Natural killer cell (primary cell): ENCODE measurements at regions of chr20 and their contacts with region 1.

Region 1: DNA sequence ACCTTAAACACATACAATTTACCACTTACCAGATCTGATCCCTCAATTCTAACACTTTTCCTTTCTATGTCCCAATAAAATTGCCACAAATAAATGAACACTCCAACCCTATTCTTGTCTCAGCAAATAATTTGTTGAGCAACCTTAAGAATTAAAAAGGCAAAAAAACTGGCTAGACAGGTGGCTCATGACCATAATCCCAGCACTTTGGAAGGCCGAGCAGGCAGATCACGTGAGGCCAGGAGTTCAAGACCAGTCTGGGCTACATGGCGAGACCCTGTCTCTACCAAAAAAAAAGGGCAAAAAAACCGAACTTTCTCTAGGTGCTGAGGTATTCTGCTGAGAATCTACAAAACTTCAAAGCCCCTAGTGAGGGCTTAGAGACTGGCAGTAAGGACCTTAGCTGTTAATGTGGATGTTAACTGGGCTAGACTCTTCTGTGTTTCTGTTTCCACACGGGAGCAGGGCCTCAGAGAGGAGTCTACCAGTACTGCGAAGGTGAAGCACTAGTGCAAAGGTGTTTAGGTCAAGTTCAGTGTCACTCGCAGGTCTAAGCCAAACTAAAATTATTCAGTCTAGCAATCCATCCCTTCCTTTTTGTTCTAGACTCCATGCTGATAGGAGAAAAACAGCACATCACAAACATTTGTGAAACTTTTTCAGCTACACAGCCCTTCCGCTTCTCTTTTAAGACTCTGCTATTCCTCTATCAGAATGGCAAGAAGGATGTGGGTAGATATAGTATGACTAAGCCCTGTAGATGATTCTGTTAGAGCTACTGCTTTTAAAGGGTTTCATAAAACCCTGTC is 2.6 kb downstream of the FASTKD5 start:
- DNase-seq: peak in 1 of 2 donors; percentile 57
- ATAC-seq: peak; percentile 18 to 66 (median 28)
- H3K4me3 ChIP-seq: no peak overlapping the region
- H3K4me3 Mint-ChIP-seq: peak overlapping the region; percentile 77
- H3K27ac ChIP-seq: peak overlapping the region; percentile 40
- H3K27ac Mint-ChIP-seq: peak overlapping the region; percentile 93 to 96
- H3K4me1 ChIP-seq: peaks cover 33% of the 10 kb centered on the region
- H3K4me1 Mint-ChIP-seq: peaks cover 53 to 62% of the 10 kb centered on the region in 2 donors
- H3K27me3 ChIP-seq: no peaks in the 10 kb centered on the region
- H3K27me3 Mint-ChIP-seq: no peaks in the 10 kb centered on the region
- CTCF ChIP-seq: no peak

Region 2: DNA sequence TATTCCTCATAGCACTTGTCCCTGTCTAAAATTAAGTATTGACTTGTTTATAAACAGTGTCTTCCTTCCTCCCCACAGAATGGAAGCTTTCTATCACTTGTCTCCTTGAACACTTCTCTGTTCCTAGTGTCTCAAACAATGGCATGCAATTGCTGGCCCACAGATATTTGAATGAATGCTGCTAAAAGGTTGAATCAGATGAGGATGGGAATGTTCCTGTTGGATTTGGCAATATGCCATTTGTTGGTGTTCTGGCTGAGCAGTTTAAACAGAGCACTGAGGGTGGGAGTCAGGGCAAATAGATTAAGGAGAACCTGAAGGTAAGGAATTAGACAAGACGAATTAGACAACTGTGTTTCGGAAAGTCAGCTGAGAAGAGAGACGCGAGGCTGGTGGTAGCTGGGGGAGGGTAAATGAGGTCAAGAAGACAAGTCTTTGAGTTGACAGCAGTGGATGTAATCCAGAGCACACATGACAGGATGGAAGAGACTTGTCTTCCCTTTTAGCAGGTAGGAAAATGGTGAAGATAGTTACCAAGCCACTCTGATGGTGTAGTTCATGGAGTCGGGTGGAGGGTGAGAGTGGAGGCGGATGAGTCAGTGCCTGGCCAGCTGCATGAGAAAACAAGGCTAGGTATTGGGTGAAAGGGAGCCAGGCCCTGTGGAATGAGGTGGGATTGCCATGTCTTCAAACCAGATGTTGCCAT is 171.9 kb before region 1 on chr20:
- intact Hi-C with region 1: no loop called
- DNase-seq: no peak
- ATAC-seq: no peak
- H3K4me3 ChIP-seq: no peak overlapping the region
- H3K4me3 Mint-ChIP-seq: no peak overlapping the region
- H3K27ac ChIP-seq: peak overlapping the region; percentile 67
- H3K27ac Mint-ChIP-seq: no peak overlapping the region
- H3K4me1 ChIP-seq: peaks cover 7% of the 10 kb centered on the region
- H3K4me1 Mint-ChIP-seq: peaks cover 8 to 10% of the 10 kb centered on the region in 2 donors
- H3K27me3 ChIP-seq: no peaks in the 10 kb centered on the region
- H3K27me3 Mint-ChIP-seq: no peaks in the 10 kb centered on the region
- CTCF ChIP-seq: no peak

Region 3: DNA sequence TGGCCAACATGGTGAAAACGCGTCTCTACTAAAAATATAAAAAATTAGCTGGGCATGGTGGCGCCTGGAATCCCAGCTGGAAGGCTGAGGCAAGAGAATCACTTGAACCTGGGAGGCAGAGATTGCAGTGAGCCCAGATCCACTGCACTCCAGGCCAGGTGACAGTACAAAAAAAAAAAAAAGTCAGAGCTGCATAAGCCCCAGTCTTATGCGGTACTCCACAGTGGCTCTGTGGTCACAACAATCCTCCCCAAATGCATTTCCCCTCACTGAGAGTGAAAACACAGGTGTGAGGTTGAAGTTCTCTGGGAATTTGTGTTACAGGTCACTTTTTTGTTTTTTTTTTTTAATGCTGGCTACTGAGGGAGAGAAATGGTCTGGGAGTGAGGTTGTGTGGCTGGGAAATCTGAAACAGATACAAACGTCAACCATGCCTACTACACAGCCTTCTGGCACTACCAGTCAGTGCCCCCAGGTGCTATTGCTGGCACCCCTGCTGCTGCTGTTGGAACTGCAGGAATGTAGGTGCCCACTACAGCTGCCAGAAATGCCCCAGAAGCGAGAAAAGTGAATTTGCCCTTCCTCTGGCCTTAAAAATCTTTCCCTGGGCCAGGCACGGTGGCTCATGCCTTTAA is 105.5 kb before region 1 on chr20:
- intact Hi-C with region 1: loop called (anchors 5 kb)
- DNase-seq: no peak
- ATAC-seq: no peak
- H3K4me3 ChIP-seq: no peak overlapping the region
- H3K4me3 Mint-ChIP-seq: no peak overlapping the region
- H3K27ac ChIP-seq: no peak overlapping the region
- H3K27ac Mint-ChIP-seq: no peak overlapping the region
- H3K4me1 ChIP-seq: peaks cover 12% of the 10 kb centered on the region
- H3K4me1 Mint-ChIP-seq: peaks cover 6 to 12% of the 10 kb centered on the region in 2 donors
- H3K27me3 ChIP-seq: no peaks in the 10 kb centered on the region
- H3K27me3 Mint-ChIP-seq: no peaks in the 10 kb centered on the region
- CTCF ChIP-seq: no peak

Region 4: GRCh38 chr20:3173610-3174441 is 16.8 kb after region 1 on chr20:
- intact Hi-C with region 1: loop called (anchors 1 kb)
- DNase-seq: peak; percentile 86 to 94
- ATAC-seq: peak in 2 of 3 donors; percentile 16
- H3K4me3 ChIP-seq: peak overlapping the region; percentile 66
- H3K4me3 Mint-ChIP-seq: peak overlapping the region; percentile 86
- H3K27ac ChIP-seq: no peak overlapping the region
- H3K27ac Mint-ChIP-seq: peak overlapping the region; percentile 49 to 82
- H3K4me1 ChIP-seq: peaks cover 19% of the 10 kb centered on the region
- H3K4me1 Mint-ChIP-seq: peaks cover 14 to 24% of the 10 kb centered on the region in 2 donors
- H3K27me3 ChIP-seq: peaks cover 27% of the 10 kb centered on the region
- H3K27me3 Mint-ChIP-seq: peaks cover 37 to 44% of the 10 kb centered on the region in 2 donors
- CTCF ChIP-seq: no peak

Region 5: DNA sequence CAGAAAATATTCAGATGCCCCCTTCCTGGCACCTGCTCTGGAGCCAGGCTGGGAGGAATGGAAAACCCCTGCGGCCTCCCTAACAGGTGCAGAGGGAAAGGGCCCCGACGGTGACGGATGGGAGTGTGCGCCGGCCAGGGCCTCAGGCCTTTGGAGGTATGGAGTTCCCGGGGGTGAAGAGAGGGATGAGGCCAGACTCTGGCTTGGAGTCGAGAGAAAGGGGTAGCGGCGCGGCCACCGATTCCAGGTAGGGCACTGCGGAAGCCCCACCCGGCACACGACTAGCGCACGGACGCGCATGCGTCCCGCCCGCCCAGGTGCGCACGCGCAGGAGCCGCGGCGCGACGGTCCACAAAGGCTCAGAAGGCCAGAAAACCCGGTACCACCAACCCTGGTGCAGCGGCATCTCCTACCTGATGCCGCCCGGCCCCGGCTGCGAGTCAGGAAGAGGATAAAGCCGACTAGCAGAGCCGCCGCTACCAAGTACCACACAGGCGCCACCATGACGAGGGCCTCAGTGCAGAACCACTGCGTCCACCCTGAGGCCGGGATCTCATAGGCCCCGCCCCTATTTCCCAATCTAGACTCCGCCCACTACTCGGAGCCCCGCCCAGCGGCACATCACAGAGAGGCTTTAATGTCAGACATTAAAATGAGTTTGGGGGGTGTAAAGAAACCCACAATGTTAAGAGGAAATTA is 47.3 kb after region 1 on chr20 and contains the start of gene DDRGK1:
- intact Hi-C with region 1: loop called (anchors 1 kb)
- DNase-seq: peak; percentile 94
- ATAC-seq: peak; percentile 92 to 97 (median 94)
- H3K4me3 ChIP-seq: peak within 1 kb of the TSS; percentile 90
- H3K4me3 Mint-ChIP-seq: peak within 1 kb of the TSS; percentile 95
- H3K27ac ChIP-seq: peak within 1 kb of the TSS; percentile 81
- H3K27ac Mint-ChIP-seq: peak within 1 kb of the TSS; percentile 92 to 95
- H3K4me1 ChIP-seq: peaks cover 22% of the 10 kb centered on the region
- H3K4me1 Mint-ChIP-seq: peaks cover 25 to 32% of the 10 kb centered on the region in 2 donors
- H3K27me3 ChIP-seq: no peaks in the 10 kb centered on the region
- H3K27me3 Mint-ChIP-seq: no peaks in the 10 kb centered on the region
- CTCF ChIP-seq: no peak
- total RNA-seq, gene DDRGK1: 47.8 to 52.6 (median 52.4) TPM

Region 6: GRCh38 chr20:3209257-3209945 is 52.4 kb after region 1 on chr20 and contains the start of gene ITPA:
- intact Hi-C with region 1: loop called (anchors 1 kb)
- DNase-seq: peak; percentile 51 to 75
- ATAC-seq: peak; percentile 24 to 42 (median 40)
- H3K4me3 ChIP-seq: peak within 1 kb of the TSS; percentile 83
- H3K4me3 Mint-ChIP-seq: peak within 1 kb of the TSS; percentile 86
- H3K27ac ChIP-seq: peak within 1 kb of the TSS; percentile 85
- H3K27ac Mint-ChIP-seq: peak within 1 kb of the TSS; percentile 83 to 92
- H3K4me1 ChIP-seq: peaks cover 19% of the 10 kb centered on the region
- H3K4me1 Mint-ChIP-seq: peaks cover 21 to 42% of the 10 kb centered on the region in 2 donors
- H3K27me3 ChIP-seq: no peaks in the 10 kb centered on the region
- H3K27me3 Mint-ChIP-seq: no peaks in the 10 kb centered on the region
- CTCF ChIP-seq: no peak
- total RNA-seq, gene ITPA: 49.6 to 53.2 (median 50.2) TPM